ENCODE measurements at regions of chr15 and their contacts with region 1.

Region 1: GRCh38 chr15:76330080-76330680 is 6.4 kb upstream of the ISL2 start:
- DNase-seq: peak; percentile 80
- H3K4me3 ChIP-seq: no peak overlapping the region
- H3K27ac ChIP-seq: no peak overlapping the region
- H3K4me1 ChIP-seq: peaks cover 0 to 2% (median 0%) of the 10 kb centered on the region in 4 donors
- H3K27me3 ChIP-seq: peaks cover 7 to 33% (median 14%) of the 10 kb centered on the region in 3 donors
- CTCF ChIP-seq: peak in 2 of 4 experiments; percentile 23 to 27
- EP300 ChIP-seq: no peak
- POLR2A ChIP-seq: no peak

Region 2: GRCh38 chr15:76190834-76191538 is 139.2 kb before region 1 on chr15:
- intact Hi-C with region 1: loop called (anchors 5 kb)
- DNase-seq: peak; percentile 89
- H3K4me3 ChIP-seq: no peak overlapping the region
- H3K27ac ChIP-seq: no peak overlapping the region
- H3K4me1 ChIP-seq: peaks cover 0 to 19% (median 17%) of the 10 kb centered on the region in 4 donors
- H3K27me3 ChIP-seq: peaks cover 0 to 65% (median 40%) of the 10 kb centered on the region in 3 donors
- CTCF ChIP-seq: peak; percentile 75 to 87 (median 84)
- EP300 ChIP-seq: no peak
- POLR2A ChIP-seq: no peak

Measured in sigmoid colon (tissue), 7 donors.